B cell (primary cell): ENCODE measurements at regions of chr14 and their contacts with region 1.

Region 1: GRCh38 chr14:63682727-63683593 is 41.3 kb upstream of the WDR89 start:
- DNase-seq: no peak
- ATAC-seq: no peak
- H3K4me3 ChIP-seq: no peak overlapping the region
- H3K4me3 Mint-ChIP-seq: no peak overlapping the region
- H3K27ac ChIP-seq: no peak overlapping the region
- H3K27ac Mint-ChIP-seq: no peak overlapping the region
- H3K4me1 ChIP-seq: no peaks in the 10 kb centered on the region
- H3K4me1 Mint-ChIP-seq: no peaks in the 10 kb centered on the region
- H3K27me3 ChIP-seq: no peaks in the 10 kb centered on the region
- H3K27me3 Mint-ChIP-seq: no peaks in the 10 kb centered on the region
- CTCF ChIP-seq: no peak

Region 2: DNA sequence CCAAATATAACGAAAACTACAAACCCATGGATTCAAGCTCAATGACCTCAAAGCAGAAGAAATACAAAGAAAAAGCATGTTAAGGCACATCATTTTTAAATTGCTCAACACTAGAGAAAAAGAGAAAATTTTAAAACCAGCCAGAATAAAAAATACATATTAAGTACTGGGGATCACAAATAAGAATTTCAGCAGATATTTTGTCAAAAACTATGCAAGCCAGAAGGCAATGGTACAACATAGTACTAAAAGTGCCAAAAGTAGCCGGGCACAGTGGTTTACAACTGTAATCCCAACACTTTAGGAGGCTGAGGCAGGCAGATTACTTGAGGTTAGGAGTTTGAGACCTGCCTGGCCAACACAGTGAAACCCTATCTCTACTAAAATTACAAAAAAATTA is 34.7 kb after region 1 on chr14:
- CTCF ChIA-PET with region 1: no interaction called
- POLR2A ChIA-PET with region 1: no interaction called
- intact Hi-C with region 1: loop called (anchors 5 kb)
- DNase-seq: peak; percentile 37
- ATAC-seq: no peak
- H3K4me3 ChIP-seq: no peak overlapping the region
- H3K4me3 Mint-ChIP-seq: no peak overlapping the region
- H3K27ac ChIP-seq: no peak overlapping the region
- H3K27ac Mint-ChIP-seq: no peak overlapping the region
- H3K4me1 ChIP-seq: peaks cover 0 to 5% of the 10 kb centered on the region in 2 donors
- H3K4me1 Mint-ChIP-seq: peaks cover 25% of the 10 kb centered on the region
- H3K27me3 ChIP-seq: no peaks in the 10 kb centered on the region
- H3K27me3 Mint-ChIP-seq: no peaks in the 10 kb centered on the region
- CTCF ChIP-seq: no peak

Region 3: DNA sequence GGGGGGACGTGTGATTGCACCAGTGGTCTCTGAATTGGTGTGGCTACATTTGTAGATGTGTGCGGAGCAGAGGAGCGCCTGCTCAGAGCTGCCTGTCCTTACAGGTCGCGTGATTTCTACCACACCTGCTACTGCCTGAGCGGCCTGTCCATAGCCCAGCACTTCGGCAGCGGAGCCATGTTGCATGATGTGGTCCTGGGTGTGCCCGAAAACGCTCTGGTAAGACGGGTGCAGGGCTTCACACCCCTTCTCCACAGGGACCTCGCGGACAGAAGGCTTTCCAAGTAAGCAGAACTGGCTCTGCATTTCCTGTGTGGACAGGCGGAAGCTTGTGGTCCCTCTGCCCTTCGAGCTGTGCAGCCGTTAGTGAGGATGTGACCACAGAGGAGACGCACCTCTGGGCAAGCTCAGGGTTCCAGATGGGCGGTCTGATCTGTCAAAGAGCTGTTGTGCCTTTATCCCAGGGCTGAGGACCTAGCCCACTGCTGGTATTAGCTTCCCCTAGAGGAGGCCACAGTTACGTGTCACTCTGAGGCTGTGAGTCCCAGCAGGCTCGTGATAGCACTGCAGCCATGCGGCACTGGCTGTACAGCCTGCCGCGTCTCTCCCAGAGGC is 1371.6 kb after region 1 on chr14:
- CTCF ChIA-PET with region 1: no interaction called
- POLR2A ChIA-PET with region 1: no interaction called
- intact Hi-C with region 1: no loop called
- DNase-seq: no peak
- ATAC-seq: no peak
- H3K4me3 ChIP-seq: peak overlapping the region in 1 of 5 experiments; percentile 11
- H3K4me3 Mint-ChIP-seq: no peak overlapping the region
- H3K27ac ChIP-seq: no peak overlapping the region
- H3K27ac Mint-ChIP-seq: no peak overlapping the region
- H3K4me1 ChIP-seq: no peaks in the 10 kb centered on the region
- H3K4me1 Mint-ChIP-seq: no peaks in the 10 kb centered on the region
- H3K27me3 ChIP-seq: no peaks in the 10 kb centered on the region
- H3K27me3 Mint-ChIP-seq: no peaks in the 10 kb centered on the region
- CTCF ChIP-seq: no peak